ENCODE measurements at regions of chr12 and their contacts with region 1.

Region 1: GRCh38 chr12:94516985-94517384 is 57.3 kb upstream of the CEP83 start:
- DNase-seq: no peak
- H3K4me3 ChIP-seq: no peak overlapping the region
- CTCF ChIP-seq: no peak
- POLR2A ChIP-seq: no peak

Region 2: DNA sequence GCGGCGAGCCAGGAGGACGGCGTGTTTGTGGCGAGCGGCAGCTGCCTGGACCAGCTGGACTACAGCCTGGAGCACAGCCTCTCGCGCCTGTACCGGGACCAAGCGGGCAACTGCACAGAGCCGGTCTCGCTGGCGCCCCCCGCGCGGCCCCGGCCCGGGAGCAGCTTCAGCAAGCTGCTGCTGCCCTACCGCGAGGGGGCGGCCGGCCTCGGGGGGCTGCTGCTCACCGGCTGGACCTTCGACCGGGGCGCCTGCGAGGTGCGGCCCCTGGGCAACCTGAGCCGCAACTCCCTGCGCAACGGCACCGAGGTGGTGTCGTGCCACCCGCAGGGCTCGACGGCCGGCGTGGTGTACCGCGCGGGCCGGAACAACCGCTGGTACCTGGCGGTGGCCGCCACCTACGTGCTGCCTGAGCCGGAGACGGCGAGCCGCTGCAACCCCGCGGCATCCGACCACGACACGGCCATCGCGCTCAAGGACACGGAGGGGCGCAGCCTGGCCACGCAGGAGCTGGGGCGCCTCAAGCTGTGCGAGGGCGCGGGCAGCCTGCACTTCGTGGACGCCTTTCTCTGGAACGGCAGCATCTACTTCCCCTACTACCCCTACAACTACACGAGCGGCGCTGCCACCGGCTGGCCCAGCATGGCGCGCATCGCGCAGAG is 367.7 kb before region 1 on chr12:
- intact Hi-C with region 1: loop called (anchors 10 kb)
- DNase-seq: peak in 1 of 2 donors; percentile 81
- H3K4me3 ChIP-seq: peak overlapping the region; percentile 36
- CTCF ChIP-seq: no peak
- POLR2A ChIP-seq: no peak

Region 3: GRCh38 chr12:96258104-96258961 is 1741.3 kb after region 1 on chr12:
- intact Hi-C with region 1: loop called (anchors 5 kb)
- DNase-seq: no peak
- H3K4me3 ChIP-seq: no peak overlapping the region
- CTCF ChIP-seq: no peak
- POLR2A ChIP-seq: no peak

Measured in lower leg skin (tissue), 4 donors.